H1 (cell line): ENCODE measurements at regions of chr3 and their contacts with region 1.

Region 1: DNA sequence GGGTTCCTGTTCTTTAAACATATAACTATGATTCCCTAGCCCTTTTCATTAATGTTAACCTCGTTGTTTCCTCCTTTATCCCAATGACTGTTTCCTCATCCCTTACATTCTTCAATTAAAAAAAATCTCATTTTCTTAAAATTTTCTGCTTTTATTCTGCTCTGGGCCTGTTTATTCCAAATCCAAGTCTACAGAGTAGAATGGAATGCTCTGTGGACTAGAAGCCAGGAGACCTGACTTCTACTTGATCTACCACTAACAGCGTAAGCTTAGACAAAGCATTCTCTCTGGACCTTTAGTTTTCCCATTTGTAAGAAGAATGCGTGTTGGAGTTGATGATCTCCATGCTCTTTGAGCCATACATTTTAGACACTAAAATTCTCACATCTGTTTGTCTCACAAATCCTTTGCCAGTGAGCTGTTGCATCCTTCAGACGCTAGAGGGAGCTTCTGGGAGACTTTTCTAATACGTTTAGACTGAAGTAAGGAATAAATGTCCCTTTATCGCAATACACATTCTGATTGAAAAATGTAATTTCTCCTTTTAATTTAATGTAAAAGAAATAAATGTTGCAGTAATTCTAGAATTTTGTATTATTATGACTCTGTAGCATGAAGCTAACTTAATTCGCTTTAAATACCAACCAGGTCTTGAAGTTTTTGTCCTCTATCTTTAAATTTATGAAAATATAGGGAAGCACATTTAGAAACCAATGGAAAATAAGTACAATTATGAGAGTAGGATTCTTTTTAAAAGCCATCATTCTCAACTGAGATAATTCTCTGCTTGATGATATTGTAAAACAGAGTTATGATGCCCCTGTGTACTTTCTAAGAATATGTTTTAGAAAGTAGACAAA is 21.7 kb upstream of the GMNC start:
- DNase-seq: peak; percentile 27 to 51
- H3K4me3 ChIP-seq: no peak overlapping the region
- H3K27ac ChIP-seq: no peak overlapping the region
- H3K4me1 ChIP-seq: no peaks in the 10 kb centered on the region
- H3K27me3 ChIP-seq: no peaks in the 10 kb centered on the region
- CTCF ChIP-seq: peak in 2 of 3 experiments; percentile 59 to 84; a peak in 3 of 4 replicates
- EP300 ChIP-seq: no peak
- POLR2A ChIP-seq: no peak
- RAD21 ChIP-seq: peak; percentile 68 to 72

Region 2: GRCh38 chr3:190811775-190812480 is 72.3 kb before region 1 on chr3:
- CTCF ChIA-PET with region 1: interaction called, 19 read pairs
- POLR2A ChIA-PET with region 1: no interaction called
- DNase-seq: peak; percentile 10 to 57
- H3K4me3 ChIP-seq: no peak overlapping the region
- H3K27ac ChIP-seq: no peak overlapping the region
- H3K4me1 ChIP-seq: no peaks in the 10 kb centered on the region
- H3K27me3 ChIP-seq: no peaks in the 10 kb centered on the region
- CTCF ChIP-seq: peak in 2 of 3 experiments; percentile 65 to 75; a peak in 3 of 4 replicates
- EP300 ChIP-seq: no peak
- POLR2A ChIP-seq: no peak
- RAD21 ChIP-seq: peak; percentile 80 to 87

Region 3: GRCh38 chr3:190865828-190866227 is 18.4 kb before region 1 on chr3:
- CTCF ChIA-PET with region 1: interaction called, 51 read pairs
- POLR2A ChIA-PET with region 1: no interaction called
- DNase-seq: no peak
- H3K4me3 ChIP-seq: no peak overlapping the region
- H3K27ac ChIP-seq: no peak overlapping the region
- H3K4me1 ChIP-seq: no peaks in the 10 kb centered on the region
- H3K27me3 ChIP-seq: peaks cover 1 to 31% (median 9%) of the 10 kb centered on the region in 4 experiments; a peak in 6 of 7 replicates
- CTCF ChIP-seq: peak in 1 of 3 experiments; percentile 10; a peak in 1 of 4 replicates
- EP300 ChIP-seq: no peak
- POLR2A ChIP-seq: no peak
- RAD21 ChIP-seq: no peak

Region 4: GRCh38 chr3:191176038-191176785 is 292.0 kb after region 1 on chr3:
- CTCF ChIA-PET with region 1: no interaction called
- POLR2A ChIA-PET with region 1: no interaction called
- DNase-seq: no peak
- H3K4me3 ChIP-seq: no peak overlapping the region
- H3K27ac ChIP-seq: no peak overlapping the region
- H3K4me1 ChIP-seq: no peaks in the 10 kb centered on the region
- H3K27me3 ChIP-seq: no peaks in the 10 kb centered on the region
- CTCF ChIP-seq: no peak
- EP300 ChIP-seq: no peak
- POLR2A ChIP-seq: no peak
- RAD21 ChIP-seq: no peak